Colonic mucosa (tissue), 4 donors: ENCODE measurements at regions of chr2 and their contacts with region 1.

Region 1: DNA sequence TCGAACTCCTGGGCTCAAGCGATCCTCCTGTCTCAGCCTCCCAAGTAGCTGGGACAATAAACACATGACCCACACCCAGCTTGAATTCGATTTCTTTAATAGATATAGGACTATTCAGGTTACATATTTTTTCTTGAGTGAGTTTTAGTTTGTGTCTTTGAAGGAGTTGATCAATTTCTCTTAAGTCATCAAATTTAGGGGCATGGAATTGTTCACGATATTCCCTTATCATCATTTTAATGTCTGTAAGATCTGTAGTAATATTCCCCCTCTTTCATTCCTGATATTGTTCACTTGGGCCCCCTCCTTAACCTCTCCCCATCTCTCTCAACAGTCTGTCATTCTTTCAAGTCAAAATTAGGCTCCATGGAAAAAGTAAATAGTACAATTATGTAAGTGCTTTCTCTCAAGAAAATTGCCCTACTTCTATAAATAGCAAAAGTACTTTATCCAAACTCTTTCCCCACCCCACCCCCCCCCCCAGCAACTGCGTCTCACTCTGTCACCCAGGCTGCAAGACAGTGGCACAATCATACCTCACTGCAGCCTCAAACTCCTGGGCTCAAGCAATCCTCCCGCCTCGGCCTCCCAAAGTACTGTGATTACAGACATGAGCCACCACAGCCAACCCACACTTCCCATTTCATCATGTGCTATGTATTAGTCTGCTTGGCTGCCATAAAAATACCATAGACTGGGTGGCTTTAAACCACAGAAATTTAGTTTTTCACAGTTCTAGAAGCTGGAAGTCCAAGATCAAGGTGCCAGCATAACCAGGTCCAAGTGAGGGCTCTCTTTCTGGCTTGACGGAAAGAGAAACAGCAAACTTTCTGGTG is 20.1 kb downstream of the WDR33 start:
- DNase-seq: no peak
- H3K4me3 ChIP-seq: no peak overlapping the region
- H3K27ac ChIP-seq: no peak overlapping the region
- H3K4me1 ChIP-seq: no peaks in the 10 kb centered on the region
- H3K27me3 ChIP-seq: no peaks in the 10 kb centered on the region
- CTCF ChIP-seq: no peak

Region 2: GRCh38 chr2:126886211-126886915 is 904.5 kb before region 1 on chr2:
- intact Hi-C with region 1: no loop called
- DNase-seq: peak; percentile 72
- H3K4me3 ChIP-seq: peak overlapping the region; percentile 16
- H3K27ac ChIP-seq: no peak overlapping the region
- H3K4me1 ChIP-seq: no peaks in the 10 kb centered on the region
- H3K27me3 ChIP-seq: no peaks in the 10 kb centered on the region
- CTCF ChIP-seq: peak; percentile 77

Region 3: GRCh38 chr2:127719301-127720218 is 71.4 kb before region 1 on chr2:
- intact Hi-C with region 1: loop called (anchors 10 kb)
- DNase-seq: no peak
- H3K4me3 ChIP-seq: no peak overlapping the region
- H3K27ac ChIP-seq: no peak overlapping the region
- H3K4me1 ChIP-seq: no peaks in the 10 kb centered on the region
- H3K27me3 ChIP-seq: no peaks in the 10 kb centered on the region
- CTCF ChIP-seq: no peak

Region 4: GRCh38 chr2:128154225-128154624 is 363.3 kb after region 1 on chr2:
- intact Hi-C with region 1: no loop called
- DNase-seq: no peak
- H3K4me3 ChIP-seq: no peak overlapping the region
- H3K27ac ChIP-seq: no peak overlapping the region
- H3K4me1 ChIP-seq: no peaks in the 10 kb centered on the region
- H3K27me3 ChIP-seq: no peaks in the 10 kb centered on the region
- CTCF ChIP-seq: no peak